Thyroid gland (tissue), 4 donors: ENCODE measurements at regions of chr15 and their contacts with region 1.

Region 1: DNA sequence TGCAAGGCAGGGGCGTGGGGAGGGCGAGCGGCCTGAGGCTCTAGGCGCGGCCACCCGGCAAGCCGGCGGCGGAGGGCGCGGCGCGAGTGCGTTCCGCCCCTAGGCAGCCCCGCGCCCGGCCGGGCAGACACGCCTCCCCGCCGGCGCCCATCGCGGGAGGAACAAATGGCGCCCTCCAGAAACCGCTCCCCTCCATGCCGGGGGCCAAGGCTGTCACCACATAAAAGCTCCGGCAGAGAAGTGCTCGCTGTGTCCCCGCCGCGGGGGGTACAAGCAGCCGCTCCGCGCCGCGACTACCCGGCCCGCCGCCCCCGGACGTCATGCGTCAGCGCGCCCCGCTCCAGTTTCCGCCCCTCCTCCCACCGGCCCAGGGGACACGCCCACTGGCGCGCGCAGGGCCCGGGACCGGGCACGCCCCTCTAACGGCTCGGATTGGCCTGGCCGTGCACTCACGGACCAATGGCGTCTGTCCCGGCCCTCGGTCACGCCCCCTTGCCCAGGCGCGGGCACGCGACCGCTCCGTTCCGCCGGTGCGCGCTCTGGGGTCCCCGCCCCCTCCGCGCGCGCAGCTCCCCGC is 391 bp upstream of the KLF13 start:
- DNase-seq: peak; percentile 98 to 99
- H3K4me3 ChIP-seq: peak overlapping the region; percentile 79 to 84 (median 80)
- H3K27ac ChIP-seq: peak overlapping the region; percentile 99 to 100 (median 99)
- H3K4me1 ChIP-seq: peaks cover 30 to 31% of the 10 kb centered on the region in 2 donors
- H3K27me3 ChIP-seq: no peaks in the 10 kb centered on the region
- CTCF ChIP-seq: peak in 1 of 6 experiments; percentile 15
- POLR2A ChIP-seq: peak; percentile 85 to 87

Region 2: DNA sequence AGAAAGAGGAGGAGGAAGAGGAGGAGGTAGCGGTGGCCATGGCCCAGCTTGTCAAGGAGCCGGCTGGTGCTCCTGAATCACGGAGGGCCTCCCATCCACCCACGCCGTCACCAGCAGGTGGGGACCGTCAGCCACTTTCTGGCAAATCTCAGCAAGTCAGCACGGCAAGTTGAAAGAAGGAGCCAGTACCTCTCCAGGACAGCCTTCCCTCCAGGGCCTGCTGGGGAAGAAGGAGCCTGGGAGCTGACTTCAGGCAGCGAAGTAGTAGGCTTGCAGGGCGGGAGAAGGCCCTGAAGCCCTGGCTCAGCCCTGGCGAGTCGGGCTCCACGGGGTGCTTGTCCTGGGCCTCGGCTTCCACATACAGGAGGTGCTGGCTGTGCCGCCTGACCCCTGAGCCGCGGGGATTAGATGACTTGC is 125.5 kb before region 1 on chr15:
- intact Hi-C with region 1: loop called (anchors 5 kb)
- DNase-seq: peak; percentile 90 to 91
- H3K4me3 ChIP-seq: no peak overlapping the region
- H3K27ac ChIP-seq: no peak overlapping the region
- H3K4me1 ChIP-seq: peaks cover 0 to 4% of the 10 kb centered on the region in 2 donors
- H3K27me3 ChIP-seq: no peaks in the 10 kb centered on the region
- CTCF ChIP-seq: peak; percentile 22 to 89 (median 68)
- POLR2A ChIP-seq: no peak

Region 3: GRCh38 chr15:31215490-31216214 is 110.6 kb before region 1 on chr15:
- intact Hi-C with region 1: loop called (anchors 5 kb)
- DNase-seq: peak; percentile 95 to 96
- H3K4me3 ChIP-seq: peak overlapping the region in 1 of 3 donors; percentile 41
- H3K27ac ChIP-seq: peak overlapping the region; percentile 93 to 95 (median 95)
- H3K4me1 ChIP-seq: peaks cover 20 to 22% of the 10 kb centered on the region in 2 donors
- H3K27me3 ChIP-seq: no peaks in the 10 kb centered on the region
- CTCF ChIP-seq: peak; percentile 69 to 87 (median 80)
- POLR2A ChIP-seq: peak in 1 of 2 donors; percentile 73

Region 4: DNA sequence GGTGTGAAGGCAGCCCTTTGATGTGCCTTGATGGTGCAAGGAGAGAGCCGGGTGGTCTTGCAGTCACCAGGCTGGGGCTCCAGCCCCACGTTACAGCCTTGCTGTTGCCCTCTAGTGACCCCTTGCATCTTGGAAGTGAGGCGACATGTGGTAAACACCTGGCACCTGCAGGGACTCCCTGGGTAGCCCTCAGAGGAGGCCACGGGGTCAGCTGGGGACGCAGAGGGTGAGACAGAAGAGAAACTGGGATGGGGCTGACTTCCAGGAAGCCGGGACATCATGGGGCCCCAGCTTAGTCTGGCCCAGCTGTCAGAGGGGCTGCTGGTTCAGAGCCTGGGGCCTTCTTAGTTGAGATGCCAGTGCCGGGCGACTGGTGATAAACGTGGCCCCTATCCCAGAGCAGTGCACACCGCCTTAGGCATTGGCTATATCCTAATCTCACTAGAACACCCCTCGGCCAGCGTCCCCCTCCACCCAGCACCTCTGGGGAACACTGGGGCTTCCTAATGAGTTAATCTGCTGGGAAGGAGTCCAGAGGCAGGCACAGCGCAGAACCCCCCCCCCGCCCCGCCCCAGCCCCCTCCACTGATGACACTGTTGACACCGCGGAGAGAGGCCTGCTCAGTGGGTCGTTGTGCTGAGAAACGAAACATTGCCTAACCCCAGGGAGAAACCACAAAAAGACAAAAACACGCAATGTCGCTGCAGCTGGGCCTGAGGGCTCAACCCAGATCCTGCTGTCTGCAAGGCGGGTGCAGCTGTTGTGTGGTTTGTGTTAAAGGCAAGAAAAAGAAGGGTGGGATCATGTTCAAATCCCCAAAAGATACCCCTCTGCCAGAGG is 60.2 kb before region 1 on chr15:
- intact Hi-C with region 1: no loop called
- DNase-seq: no peak
- H3K4me3 ChIP-seq: no peak overlapping the region
- H3K27ac ChIP-seq: peak overlapping the region in 1 of 3 donors; percentile 83
- H3K4me1 ChIP-seq: peaks cover 38 to 87% of the 10 kb centered on the region in 2 donors
- H3K27me3 ChIP-seq: no peaks in the 10 kb centered on the region
- CTCF ChIP-seq: no peak
- POLR2A ChIP-seq: no peak

Region 5: GRCh38 chr15:31365655-31366127 is 39.4 kb after region 1 on chr15:
- intact Hi-C with region 1: loop called (anchors 5 kb)
- DNase-seq: peak; percentile 98 to 99
- H3K4me3 ChIP-seq: no peak overlapping the region
- H3K27ac ChIP-seq: peak overlapping the region; percentile 96 to 100 (median 97)
- H3K4me1 ChIP-seq: peaks cover 82 to 92% of the 10 kb centered on the region in 2 donors
- H3K27me3 ChIP-seq: no peaks in the 10 kb centered on the region
- CTCF ChIP-seq: peak in 3 of 6 experiments; percentile 18 to 48 (median 43)
- POLR2A ChIP-seq: peak in 1 of 2 donors; percentile 63

Region 6: GRCh38 chr15:31488426-31489204 is 162.4 kb after region 1 on chr15:
- intact Hi-C with region 1: loop called (anchors 10 kb)
- DNase-seq: peak; percentile 59
- H3K4me3 ChIP-seq: no peak overlapping the region
- H3K27ac ChIP-seq: peak overlapping the region in 2 of 3 donors; percentile 27 to 34
- H3K4me1 ChIP-seq: peaks cover 5 to 22% of the 10 kb centered on the region in 2 donors
- H3K27me3 ChIP-seq: no peaks in the 10 kb centered on the region
- CTCF ChIP-seq: peak; percentile 84 to 99 (median 94)
- POLR2A ChIP-seq: no peak